SK-N-SH (cell line): ENCODE measurements at regions of chr6 and their contacts with region 1.

Region 1: GRCh38 chr6:70221025-70221714 is 81.7 kb downstream of the COL9A1 start:
- DNase-seq: peak; percentile 68
- H3K4me3 ChIP-seq: no peak overlapping the region
- H3K27ac ChIP-seq: no peak overlapping the region
- H3K4me1 ChIP-seq: no peaks in the 10 kb centered on the region; a peak in 2 of 4 replicates
- H3K27me3 ChIP-seq: peaks cover 8% of the 10 kb centered on the region; the same call in 1 of the 2 replicates
- CTCF ChIP-seq: peak; percentile 68
- EP300 ChIP-seq: no peak
- RAD21 ChIP-seq: peak; percentile 90

Region 2: GRCh38 chr6:70210462-70210861 is 10.7 kb before region 1 on chr6:
- CTCF ChIA-PET with region 1: interaction called, 22 read pairs
- POLR2A ChIA-PET with region 1: no interaction called
- DNase-seq: peak; percentile 17
- H3K4me3 ChIP-seq: no peak overlapping the region
- H3K27ac ChIP-seq: no peak overlapping the region
- H3K4me1 ChIP-seq: no peaks in the 10 kb centered on the region
- H3K27me3 ChIP-seq: no peaks in the 10 kb centered on the region
- CTCF ChIP-seq: peak; percentile 38
- EP300 ChIP-seq: no peak
- RAD21 ChIP-seq: peak; percentile 28

Region 3: GRCh38 chr6:70246110-70246509 is 24.9 kb after region 1 on chr6:
- CTCF ChIA-PET with region 1: interaction called, 16 read pairs
- POLR2A ChIA-PET with region 1: no interaction called
- DNase-seq: no peak
- H3K4me3 ChIP-seq: no peak overlapping the region
- H3K27ac ChIP-seq: no peak overlapping the region
- H3K4me1 ChIP-seq: no peaks in the 10 kb centered on the region
- H3K27me3 ChIP-seq: no peaks in the 10 kb centered on the region; the same call in 1 of the 2 replicates
- CTCF ChIP-seq: no peak
- EP300 ChIP-seq: no peak
- RAD21 ChIP-seq: no peak

Region 4: DNA sequence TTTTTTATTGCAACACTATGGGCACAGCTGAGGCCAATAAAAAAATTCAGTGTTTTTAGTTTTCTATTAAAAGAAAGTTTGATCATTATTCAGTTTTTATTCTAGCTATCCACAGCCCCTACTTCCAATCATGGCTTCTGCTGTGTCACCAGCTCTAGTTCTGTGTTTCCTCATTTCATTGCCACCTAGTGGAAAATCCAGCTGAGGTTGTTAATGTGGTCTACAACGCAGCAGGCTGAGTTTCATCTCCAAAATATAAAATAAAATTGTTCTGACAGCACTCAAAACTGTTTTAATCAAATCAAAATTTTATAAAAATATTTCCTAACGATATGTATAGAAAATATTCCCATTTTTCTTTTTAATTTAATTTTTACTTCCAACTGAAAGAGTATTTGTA is 68.1 kb after region 1 on chr6:
- CTCF ChIA-PET with region 1: interaction called, 19 read pairs
- POLR2A ChIA-PET with region 1: no interaction called
- DNase-seq: peak; percentile 13
- H3K4me3 ChIP-seq: no peak overlapping the region
- H3K27ac ChIP-seq: no peak overlapping the region
- H3K4me1 ChIP-seq: no peaks in the 10 kb centered on the region
- H3K27me3 ChIP-seq: no peaks in the 10 kb centered on the region
- CTCF ChIP-seq: peak; percentile 25; the same call in 1 of the 2 replicates
- EP300 ChIP-seq: no peak
- RAD21 ChIP-seq: no peak

Region 5: DNA sequence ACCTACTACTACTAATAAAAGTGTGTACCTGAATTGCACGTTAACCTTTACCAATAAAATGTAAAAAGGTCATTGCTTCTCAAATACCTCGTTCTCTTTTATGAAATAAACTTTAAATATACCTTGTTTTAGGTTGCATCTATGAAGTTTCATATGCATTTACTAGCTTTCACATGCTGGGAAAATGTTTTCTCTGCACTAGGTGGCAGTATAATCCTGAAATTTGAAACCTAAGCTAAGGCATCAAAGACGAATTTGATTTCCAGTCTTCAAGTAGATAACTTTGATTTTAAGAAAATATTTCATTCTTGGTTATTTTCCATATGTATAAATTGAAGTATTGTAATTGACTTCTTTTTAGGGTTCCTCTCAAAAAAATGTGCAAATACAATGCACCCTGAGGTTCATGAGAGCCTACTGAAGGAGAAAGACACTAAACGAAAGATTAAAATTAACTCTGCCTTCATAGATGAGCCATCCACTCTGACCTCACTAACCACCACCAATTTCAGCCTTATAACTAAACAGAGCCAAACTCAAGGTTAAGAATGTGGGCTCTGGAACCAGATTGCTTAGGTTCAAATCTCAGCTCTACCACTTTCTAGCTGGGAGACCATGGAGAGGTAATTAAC is 89.0 kb after region 1 on chr6:
- CTCF ChIA-PET with region 1: interaction called, 50 read pairs
- POLR2A ChIA-PET with region 1: no interaction called
- DNase-seq: peak; percentile 8
- H3K4me3 ChIP-seq: peak overlapping the region in 1 of 2 experiments; percentile 11; a peak in 1 of 4 replicates
- H3K27ac ChIP-seq: no peak overlapping the region
- H3K4me1 ChIP-seq: no peaks in the 10 kb centered on the region
- H3K27me3 ChIP-seq: peaks cover under 1% of the 10 kb centered on the region; the same call in 1 of the 2 replicates
- CTCF ChIP-seq: peak; percentile 83
- EP300 ChIP-seq: no peak
- RAD21 ChIP-seq: peak; percentile 82

Region 6: GRCh38 chr6:70686548-70687133 is 465.5 kb after region 1 on chr6:
- CTCF ChIA-PET with region 1: interaction called, 15 read pairs
- POLR2A ChIA-PET with region 1: no interaction called
- DNase-seq: peak; percentile 24
- H3K4me3 ChIP-seq: no peak overlapping the region; a peak in 1 of 4 replicates
- H3K27ac ChIP-seq: no peak overlapping the region
- H3K4me1 ChIP-seq: no peaks in the 10 kb centered on the region
- H3K27me3 ChIP-seq: no peaks in the 10 kb centered on the region
- CTCF ChIP-seq: peak; percentile 88
- EP300 ChIP-seq: no peak
- RAD21 ChIP-seq: peak; percentile 73